Vagina (tissue), 2 donors: ENCODE measurements at regions of chr15 and their contacts with region 1.

Region 1: DNA sequence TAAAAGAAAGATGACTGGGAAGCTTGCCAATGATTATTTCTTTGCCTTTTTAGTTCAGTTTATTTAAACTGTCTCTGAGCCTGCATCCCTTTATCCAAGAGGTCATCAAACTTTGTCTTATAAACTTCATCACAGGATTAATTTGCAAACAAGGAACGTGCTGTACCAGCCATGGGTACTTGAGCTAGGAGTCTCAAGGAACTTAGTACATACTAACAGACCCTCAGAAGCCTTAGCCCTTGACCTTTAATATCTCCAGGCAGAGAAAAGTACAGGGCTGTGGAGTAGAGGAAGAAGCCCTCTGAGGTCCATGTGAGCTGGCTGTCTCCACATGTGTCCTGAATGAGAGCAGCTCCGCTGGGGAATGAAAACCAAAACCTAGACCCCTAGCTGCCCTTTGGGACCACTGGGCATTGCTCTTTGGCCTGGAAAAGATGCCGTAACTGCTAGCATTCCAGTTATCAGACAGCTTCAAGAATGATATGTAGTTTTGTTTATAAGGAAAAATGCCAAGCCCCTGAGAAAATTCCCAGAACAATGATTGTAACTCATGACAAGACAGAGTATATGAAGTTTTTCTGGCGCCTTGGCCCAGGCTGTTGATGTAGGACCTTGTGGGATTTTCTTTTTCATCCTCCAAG is 92.1 kb downstream of the ASB7 start:
- DNase-seq: peak in 1 of 2 donors; percentile 85
- H3K4me3 ChIP-seq: no peak overlapping the region
- H3K27ac ChIP-seq: no peak overlapping the region
- H3K4me1 ChIP-seq: peaks cover 11% of the 10 kb centered on the region
- H3K27me3 ChIP-seq: no peaks in the 10 kb centered on the region
- CTCF ChIP-seq: no peak
- POLR2A ChIP-seq: no peak

Region 2: GRCh38 chr15:100721770-100722550 is 27.5 kb after region 1 on chr15:
- intact Hi-C with region 1: loop called (anchors 1 kb)
- DNase-seq: peak; percentile 93 to 99
- H3K4me3 ChIP-seq: no peak overlapping the region
- H3K27ac ChIP-seq: peak overlapping the region; percentile 85
- H3K4me1 ChIP-seq: peaks cover 50% of the 10 kb centered on the region
- H3K27me3 ChIP-seq: no peaks in the 10 kb centered on the region
- CTCF ChIP-seq: no peak
- POLR2A ChIP-seq: no peak